Activated T-helper 2 cell treated with anti-CD3 and anti-CD28 coated beads, Interferon-gamma antibody, Interleukin-2, Interleukin-4, amounts not matched to agents 10 μg/mL and 5 μg/mL and 100 μg/mL, durations not matched to agents 14 hours and 24 hours and 36 hours (primary cell): ENCODE measurements at regions of chr11 and their contacts with region 1.

Region 1: DNA sequence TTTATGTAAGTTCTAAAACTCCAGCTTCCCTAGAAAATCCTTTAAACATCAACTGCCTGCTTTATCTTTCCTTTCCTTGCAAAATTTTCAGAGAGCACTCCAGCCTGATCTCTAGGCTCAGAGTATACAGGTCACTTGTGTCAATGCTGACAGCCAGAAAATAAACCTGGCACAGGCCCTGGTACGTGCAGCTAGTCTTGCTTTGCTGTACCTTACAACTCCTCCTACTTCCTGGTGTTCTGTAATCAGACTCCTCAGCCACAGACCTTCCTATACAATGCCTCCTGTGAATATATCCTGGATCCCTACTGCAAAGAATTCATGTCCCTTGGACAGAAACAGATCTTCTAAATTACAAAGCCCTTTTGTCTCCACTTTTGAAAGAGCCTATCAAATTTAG is 24.2 kb upstream of the TMEM123 start:
- DNase-seq: no peak
- H3K4me3 Mint-ChIP-seq: peak overlapping the region; percentile 19
- H3K27ac Mint-ChIP-seq: peak overlapping the region; percentile 88
- H3K4me1 Mint-ChIP-seq: peaks cover 55% of the 10 kb centered on the region
- H3K27me3 Mint-ChIP-seq: no peaks in the 10 kb centered on the region

Region 2: GRCh38 chr11:102430158-102430836 is 46.5 kb before region 1 on chr11:
- intact Hi-C with region 1: no loop called
- DNase-seq: no peak
- H3K4me3 Mint-ChIP-seq: no peak overlapping the region
- H3K27ac Mint-ChIP-seq: peak overlapping the region; percentile 71
- H3K4me1 Mint-ChIP-seq: peaks cover 39% of the 10 kb centered on the region
- H3K27me3 Mint-ChIP-seq: no peaks in the 10 kb centered on the region

Region 3: DNA sequence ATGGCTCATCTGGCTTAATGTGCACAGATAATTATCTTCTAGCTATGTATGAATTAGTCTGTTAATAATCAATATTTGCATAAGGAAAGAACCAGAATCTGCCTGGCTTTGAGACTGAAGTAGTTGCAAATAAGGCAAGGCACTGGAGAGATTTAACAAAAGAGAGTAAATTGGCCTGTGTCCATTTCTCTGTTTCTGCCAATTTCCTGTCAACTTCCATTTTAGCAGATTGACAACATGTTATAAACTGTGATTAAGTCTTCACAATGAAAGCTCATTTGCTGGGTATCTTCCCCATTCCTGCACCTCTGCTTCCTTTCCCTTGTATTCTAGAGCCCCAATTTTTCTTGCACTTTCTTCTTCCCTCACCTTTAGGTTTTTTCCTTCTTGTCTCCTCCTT is 18.9 kb before region 1 on chr11:
- intact Hi-C with region 1: loop called (anchors 1 kb)
- DNase-seq: no peak
- H3K4me3 Mint-ChIP-seq: no peak overlapping the region
- H3K27ac Mint-ChIP-seq: peak overlapping the region; percentile 18
- H3K4me1 Mint-ChIP-seq: peaks cover 67% of the 10 kb centered on the region
- H3K27me3 Mint-ChIP-seq: no peaks in the 10 kb centered on the region